Naive thymus-derived CD4-positive, alpha-beta T cell (primary cell): ENCODE measurements at regions of chr12 and their contacts with region 1.

Region 1: DNA sequence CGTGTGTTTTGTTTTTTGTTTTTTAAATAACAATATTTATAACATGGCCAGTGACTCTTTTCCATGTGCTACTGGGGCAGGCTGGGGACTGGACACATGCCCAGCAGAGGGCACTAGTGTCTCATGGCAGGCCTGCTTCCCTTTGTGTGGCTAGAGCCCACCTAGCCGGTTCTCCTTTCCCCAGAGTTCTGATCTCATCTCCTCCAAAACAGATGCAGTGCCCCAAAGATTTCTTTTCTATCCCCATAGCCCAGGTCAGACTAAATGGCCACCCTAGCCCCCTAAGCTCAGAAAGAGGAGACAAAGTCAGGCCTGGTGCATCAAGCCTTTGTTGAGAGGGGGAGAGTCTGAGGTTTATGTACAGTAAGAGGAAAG is 21.2 kb downstream of the PRPF40B start:
- DNase-seq: peak; percentile 71 to 86 (median 81)
- ATAC-seq: peak; percentile 96
- H3K4me3 ChIP-seq: no peak overlapping the region
- H3K4me3 Mint-ChIP-seq: peak overlapping the region in 9 of 10 donors; percentile 3 to 69 (median 41)
- H3K27ac ChIP-seq: peak overlapping the region; percentile 32
- H3K27ac Mint-ChIP-seq: peak overlapping the region; percentile 78 to 96 (median 89)
- H3K4me1 ChIP-seq: peaks cover 7 to 10% of the 10 kb centered on the region in 2 donors
- H3K4me1 Mint-ChIP-seq: peaks cover 25 to 56% (median 37%) of the 10 kb centered on the region in 7 donors
- H3K27me3 ChIP-seq: no peaks in the 10 kb centered on the region
- H3K27me3 Mint-ChIP-seq: no peaks in the 10 kb centered on the region

Region 2: GRCh38 chr12:49615725-49616124 is 28.9 kb before region 1 on chr12:
- CTCF ChIA-PET with region 1: no interaction called
- POLR2A ChIA-PET with region 1: no interaction called
- intact Hi-C with region 1: no loop called
- DNase-seq: no peak
- ATAC-seq: no peak
- H3K4me3 ChIP-seq: no peak overlapping the region
- H3K4me3 Mint-ChIP-seq: no peak overlapping the region
- H3K27ac ChIP-seq: no peak overlapping the region
- H3K27ac Mint-ChIP-seq: no peak overlapping the region
- H3K4me1 ChIP-seq: no peaks in the 10 kb centered on the region
- H3K4me1 Mint-ChIP-seq: peaks cover under 1 to 13% (median 7%) of the 10 kb centered on the region in 7 donors
- H3K27me3 ChIP-seq: peaks cover 0 to 2% of the 10 kb centered on the region in 2 donors
- H3K27me3 Mint-ChIP-seq: peaks cover 5 to 40% (median 17%) of the 10 kb centered on the region in 5 donors

Region 3: DNA sequence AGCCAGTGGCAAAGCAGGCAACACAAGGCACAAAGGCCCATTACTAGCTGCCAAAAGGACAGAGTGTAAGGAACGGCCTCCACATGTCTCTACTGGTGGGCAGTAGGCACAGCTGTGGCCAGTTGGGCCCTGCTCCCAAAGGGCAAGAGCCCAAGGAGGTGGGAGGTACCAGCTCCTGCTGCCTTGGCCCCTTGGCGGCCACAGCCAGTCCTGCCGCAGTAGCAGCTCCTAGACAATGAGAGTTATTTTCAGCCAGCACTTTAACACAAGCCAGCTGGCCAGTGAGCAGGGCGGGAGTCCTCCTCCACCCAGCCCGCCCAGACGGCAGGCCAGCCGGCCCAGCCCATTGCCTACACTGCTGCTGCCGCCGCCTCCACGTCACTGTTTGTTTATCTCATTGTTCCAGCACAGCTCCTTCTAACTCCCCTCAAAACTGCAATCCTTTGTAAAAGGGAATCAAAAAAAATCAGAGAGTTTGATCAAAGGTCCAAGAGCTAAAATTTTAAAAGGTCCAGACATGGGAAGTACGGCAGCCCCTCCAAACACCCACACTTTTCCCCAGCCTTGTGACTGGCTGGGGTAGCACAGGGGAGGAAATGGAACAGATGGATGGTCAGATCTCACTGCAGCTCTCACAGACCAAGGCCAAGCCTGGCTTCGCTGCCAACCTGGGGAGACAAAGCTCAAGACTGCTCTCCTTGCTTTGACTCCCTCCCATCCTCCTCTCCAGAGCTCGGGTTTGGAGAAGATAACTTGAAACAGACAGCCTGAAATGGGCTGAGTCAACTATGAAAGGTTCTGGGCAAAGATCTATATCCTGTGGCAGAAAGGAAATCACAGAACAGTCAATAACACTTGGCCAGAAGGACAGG is 29.1 kb after region 1 on chr12:
- CTCF ChIA-PET with region 1: interaction called, 19 read pairs
- POLR2A ChIA-PET with region 1: interaction called, 9 read pairs
- intact Hi-C with region 1: loop called in 1 of 2 experiments (anchors 1 kb)
- DNase-seq: peak in 3 of 9 donors; percentile 11 to 26 (median 12)
- ATAC-seq: no peak
- H3K4me3 ChIP-seq: no peak overlapping the region
- H3K4me3 Mint-ChIP-seq: peak overlapping the region; percentile 18 to 85 (median 70)
- H3K27ac ChIP-seq: peak overlapping the region; percentile 85
- H3K27ac Mint-ChIP-seq: peak overlapping the region; percentile 71 to 99 (median 96)
- H3K4me1 ChIP-seq: peaks cover 39 to 64% of the 10 kb centered on the region in 2 donors
- H3K4me1 Mint-ChIP-seq: peaks cover 60 to 92% (median 92%) of the 10 kb centered on the region in 7 donors
- H3K27me3 ChIP-seq: no peaks in the 10 kb centered on the region
- H3K27me3 Mint-ChIP-seq: no peaks in the 10 kb centered on the region

Region 4: GRCh38 chr12:49678711-49679110 is 34.1 kb after region 1 on chr12:
- CTCF ChIA-PET with region 1: interaction called, 10 read pairs
- POLR2A ChIA-PET with region 1: interaction called, 9 read pairs
- intact Hi-C with region 1: no loop called
- DNase-seq: no peak
- ATAC-seq: no peak
- H3K4me3 ChIP-seq: no peak overlapping the region
- H3K4me3 Mint-ChIP-seq: no peak overlapping the region
- H3K27ac ChIP-seq: no peak overlapping the region
- H3K27ac Mint-ChIP-seq: peak overlapping the region in 4 of 9 donors; percentile 30 to 69 (median 54)
- H3K4me1 ChIP-seq: peaks cover 4 to 15% of the 10 kb centered on the region in 2 donors
- H3K4me1 Mint-ChIP-seq: peaks cover 32 to 83% (median 74%) of the 10 kb centered on the region in 7 donors
- H3K27me3 ChIP-seq: no peaks in the 10 kb centered on the region
- H3K27me3 Mint-ChIP-seq: no peaks in the 10 kb centered on the region

Region 5: DNA sequence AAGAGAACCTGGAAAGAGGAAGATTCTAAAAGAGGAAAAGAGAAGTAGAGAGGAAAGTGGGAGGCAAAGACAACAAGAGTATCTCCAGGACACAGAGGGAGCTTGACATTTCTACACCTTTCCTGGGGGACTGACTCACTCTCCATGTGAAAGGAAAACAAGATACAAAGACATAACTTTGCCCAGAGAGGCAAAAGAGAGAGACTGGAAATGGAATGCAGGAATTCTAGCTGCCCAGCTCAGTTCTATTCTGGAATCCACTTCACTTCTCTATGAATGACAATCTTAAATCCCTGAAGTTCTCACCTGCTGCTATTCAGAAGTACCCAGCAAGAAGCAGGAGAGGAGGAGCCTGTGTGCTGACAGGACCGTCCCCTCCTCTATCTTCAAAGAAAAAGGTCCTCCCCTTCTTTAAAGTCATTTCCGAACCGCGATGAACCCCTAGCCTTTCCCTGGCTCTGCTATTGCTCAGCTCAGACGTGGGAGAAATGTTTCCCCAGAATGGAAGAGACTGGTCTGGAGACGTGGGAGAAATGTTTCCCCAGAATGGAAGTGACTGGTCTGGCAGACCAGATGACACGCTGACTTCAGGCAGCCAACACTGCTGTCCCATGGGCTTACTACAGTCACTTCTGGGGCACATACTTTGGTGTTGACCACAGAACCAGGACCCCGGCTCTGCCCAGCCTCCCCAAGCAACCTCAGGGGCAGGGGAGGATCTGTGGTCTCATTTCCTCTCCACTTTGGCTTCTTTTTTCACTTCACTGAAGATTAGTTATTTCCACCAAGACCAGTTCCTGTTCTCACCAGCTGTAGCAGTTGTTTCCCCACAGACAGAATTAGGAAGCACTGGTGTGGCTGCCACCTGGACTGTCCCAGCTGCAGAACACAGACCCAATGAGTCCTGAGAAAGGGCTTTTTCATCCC is 54.3 kb after region 1 on chr12:
- CTCF ChIA-PET with region 1: interaction called, 229 read pairs
- POLR2A ChIA-PET with region 1: interaction called, 7 read pairs
- intact Hi-C with region 1: no loop called
- DNase-seq: peak in 8 of 9 donors; percentile 15 to 54 (median 24)
- ATAC-seq: peak; percentile 75
- H3K4me3 ChIP-seq: peak overlapping the region; percentile 54
- H3K4me3 Mint-ChIP-seq: peak overlapping the region; percentile 75 to 90 (median 84)
- H3K27ac ChIP-seq: peak overlapping the region; percentile 34
- H3K27ac Mint-ChIP-seq: peak overlapping the region; percentile 32 to 93 (median 83)
- H3K4me1 ChIP-seq: peaks cover 14 to 39% of the 10 kb centered on the region in 2 donors
- H3K4me1 Mint-ChIP-seq: peaks cover 44 to 74% (median 65%) of the 10 kb centered on the region in 7 donors
- H3K27me3 ChIP-seq: no peaks in the 10 kb centered on the region
- H3K27me3 Mint-ChIP-seq: no peaks in the 10 kb centered on the region

Region 6: GRCh38 chr12:49866859-49867579 is 222.4 kb after region 1 on chr12:
- CTCF ChIA-PET with region 1: no interaction called
- POLR2A ChIA-PET with region 1: no interaction called
- intact Hi-C with region 1: no loop called
- DNase-seq: peak; percentile 46 to 80 (median 62)
- ATAC-seq: peak; percentile 86
- H3K4me3 ChIP-seq: no peak overlapping the region
- H3K4me3 Mint-ChIP-seq: no peak overlapping the region
- H3K27ac ChIP-seq: no peak overlapping the region
- H3K27ac Mint-ChIP-seq: no peak overlapping the region
- H3K4me1 ChIP-seq: no peaks in the 10 kb centered on the region
- H3K4me1 Mint-ChIP-seq: peaks cover 0 to 6% (median 0%) of the 10 kb centered on the region in 7 donors
- H3K27me3 ChIP-seq: no peaks in the 10 kb centered on the region
- H3K27me3 Mint-ChIP-seq: peaks cover 0 to 4% (median 0%) of the 10 kb centered on the region in 5 donors